Psoas muscle (tissue), 8 donors: ENCODE measurements at regions of chr9 and their contacts with region 1.

Region 1: DNA sequence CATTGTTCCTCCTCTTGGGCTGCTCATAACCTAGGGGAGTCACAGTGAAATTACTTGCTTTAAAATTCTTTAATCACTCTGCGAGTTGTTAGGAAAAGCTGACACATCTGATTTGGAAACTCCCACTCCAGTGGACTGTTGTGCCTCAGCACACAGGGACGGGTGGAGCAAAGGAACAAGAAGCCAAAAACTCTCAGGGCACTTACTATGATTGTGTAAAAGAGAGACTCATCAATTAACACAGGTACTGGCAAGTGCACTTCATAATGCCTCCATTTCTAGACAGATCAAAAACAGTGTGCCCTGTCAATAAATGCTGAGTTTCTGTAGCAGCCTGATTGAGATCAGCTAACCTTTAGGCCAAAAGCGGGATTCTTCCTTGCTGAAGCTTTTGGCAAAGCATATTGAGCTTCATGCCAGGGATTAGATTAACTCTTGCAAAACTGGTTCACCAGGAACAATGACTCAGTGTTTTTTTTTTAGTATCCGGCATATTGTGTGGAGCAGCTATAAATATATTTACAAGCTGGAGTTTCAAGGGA is 55.9 kb downstream of the TMC1 start:
- DNase-seq: no peak
- ATAC-seq: peak; percentile 69 to 85 (median 80)
- H3K4me3 ChIP-seq: peak overlapping the region; percentile 52
- H3K27ac ChIP-seq: peak overlapping the region; percentile 87
- H3K4me1 ChIP-seq: peaks cover 53% of the 10 kb centered on the region
- H3K27me3 ChIP-seq: no peaks in the 10 kb centered on the region
- CTCF ChIP-seq: no peak

Region 2: GRCh38 chr9:71984403-71984802 is 592.9 kb before region 1 on chr9:
- intact Hi-C with region 1: loop called in 1 of 2 experiments (anchors 10 kb)
- DNase-seq: peak; percentile 68 to 92
- ATAC-seq: peak; percentile 97 to 100 (median 99)
- H3K4me3 ChIP-seq: no peak overlapping the region
- H3K27ac ChIP-seq: peak overlapping the region; percentile 59
- H3K4me1 ChIP-seq: peaks cover 27% of the 10 kb centered on the region
- H3K27me3 ChIP-seq: no peaks in the 10 kb centered on the region
- CTCF ChIP-seq: no peak

Region 3: GRCh38 chr9:72364679-72365524 is 212.4 kb before region 1 on chr9 and contains the start of gene ZFAND5:
- intact Hi-C with region 1: loop called (anchors 2 to 5 kb)
- DNase-seq: peak; percentile 100
- ATAC-seq: peak; percentile 88 to 93 (median 90)
- H3K4me3 ChIP-seq: peak within 1 kb of the TSS; percentile 84
- H3K27ac ChIP-seq: peak within 1 kb of the TSS; percentile 99
- H3K4me1 ChIP-seq: peaks cover 12% of the 10 kb centered on the region
- H3K27me3 ChIP-seq: no peaks in the 10 kb centered on the region
- CTCF ChIP-seq: no peak
- total RNA-seq, gene ZFAND5: 466 to 795 (median 548) TPM

Region 4: GRCh38 chr9:72476617-72477375 is 100.5 kb before region 1 on chr9:
- intact Hi-C with region 1: loop called in 1 of 2 experiments (anchors 5 kb)
- DNase-seq: no peak
- ATAC-seq: peak; percentile 56 to 91 (median 76)
- H3K4me3 ChIP-seq: no peak overlapping the region
- H3K27ac ChIP-seq: no peak overlapping the region
- H3K4me1 ChIP-seq: peaks cover 10% of the 10 kb centered on the region
- H3K27me3 ChIP-seq: no peaks in the 10 kb centered on the region
- CTCF ChIP-seq: no peak

Region 5: DNA sequence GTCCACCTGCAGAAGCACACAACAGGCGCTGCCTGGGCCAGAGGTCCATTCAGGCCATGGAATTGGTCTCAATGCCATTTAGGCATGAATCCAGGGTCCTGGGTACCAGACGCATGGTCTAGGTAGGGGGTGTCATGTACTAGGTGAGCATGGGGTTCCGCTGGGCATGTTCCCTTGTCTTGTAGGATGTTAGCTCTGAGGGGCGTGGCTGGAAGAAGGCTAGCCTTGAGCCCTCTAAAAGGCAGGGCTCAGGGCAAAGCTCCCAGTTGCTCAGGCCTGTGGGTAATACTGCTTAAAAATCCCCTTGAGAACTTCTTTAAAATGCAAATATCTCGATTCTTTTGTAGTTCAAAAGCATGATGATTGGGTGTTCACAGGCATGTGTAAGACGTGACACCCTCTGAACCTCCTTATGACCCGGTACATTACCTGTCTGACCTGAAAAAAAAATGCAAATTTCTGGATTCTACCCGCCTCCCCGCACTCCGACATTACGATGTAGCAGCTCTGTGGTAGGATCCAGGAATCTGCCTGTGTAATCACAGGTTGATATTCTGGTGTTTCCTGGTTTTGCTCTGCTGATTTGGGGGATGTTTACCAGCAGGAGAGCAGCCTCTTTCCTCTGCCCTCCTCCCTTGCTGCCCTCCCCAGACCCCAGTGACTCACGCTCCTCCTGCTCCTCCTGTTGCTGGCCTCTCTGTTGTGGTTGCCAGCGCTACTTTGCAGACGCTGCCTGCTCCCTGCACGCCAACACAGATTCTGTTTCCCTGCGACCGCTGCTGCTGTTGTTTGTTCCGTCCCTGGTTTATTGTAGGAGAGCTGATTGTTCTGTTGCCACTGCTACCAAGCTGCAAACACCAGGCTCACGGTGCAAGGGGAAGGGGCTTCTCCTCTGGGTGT is 50.1 kb before region 1 on chr9:
- intact Hi-C with region 1: loop called in 1 of 2 experiments (anchors 5 kb)
- DNase-seq: peak; percentile 74 to 83
- ATAC-seq: peak; percentile 94 to 99 (median 96)
- H3K4me3 ChIP-seq: peak overlapping the region; percentile 52
- H3K27ac ChIP-seq: peak overlapping the region; percentile 67
- H3K4me1 ChIP-seq: peaks cover 16% of the 10 kb centered on the region
- H3K27me3 ChIP-seq: no peaks in the 10 kb centered on the region
- CTCF ChIP-seq: no peak

Region 6: DNA sequence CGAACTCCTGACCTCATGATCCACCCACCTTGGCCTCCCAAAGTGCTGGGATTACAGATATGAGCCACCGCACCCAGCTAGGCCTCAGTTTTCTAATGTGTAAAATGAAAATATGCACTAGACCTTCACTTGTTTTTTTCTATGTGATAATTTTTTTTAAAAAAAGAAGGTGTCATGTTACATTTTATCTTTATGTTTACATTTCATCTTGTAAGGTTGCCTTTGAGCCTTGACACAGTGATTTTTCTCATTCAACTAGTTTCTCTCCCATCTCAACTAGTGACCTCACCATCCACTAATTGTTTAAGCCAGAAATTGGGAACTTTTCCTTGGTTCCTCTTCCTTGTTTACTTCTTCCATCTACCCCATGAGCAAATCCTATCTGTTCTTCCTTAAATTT is 34.4 kb before region 1 on chr9:
- intact Hi-C with region 1: no loop called
- DNase-seq: no peak
- ATAC-seq: no peak
- H3K4me3 ChIP-seq: no peak overlapping the region
- H3K27ac ChIP-seq: no peak overlapping the region
- H3K4me1 ChIP-seq: no peaks in the 10 kb centered on the region
- H3K27me3 ChIP-seq: no peaks in the 10 kb centered on the region
- CTCF ChIP-seq: no peak